ENCODE measurements at regions of chr1 and their contacts with region 1.

Region 1: GRCh38 chr1:11719313-11720032 is 16.5 kb upstream of the AGTRAP start:
- DNase-seq: peak; percentile 47 to 67
- ATAC-seq: peak; percentile 65 to 69
- H3K4me3 ChIP-seq: peak overlapping the region; percentile 29 to 55 (median 50)
- H3K27ac ChIP-seq: no peak overlapping the region
- H3K4me1 ChIP-seq: peaks cover 0 to 8% of the 10 kb centered on the region in 2 donors
- H3K27me3 ChIP-seq: no peaks in the 10 kb centered on the region
- CTCF ChIP-seq: peak; percentile 73 to 96 (median 88)
- POLR2A ChIP-seq: no peak

Region 2: GRCh38 chr1:11661103-11661502 is 58.4 kb before region 1 on chr1:
- in situ Hi-C with region 1: loop called (anchors 5 to 10 kb)
- intact Hi-C with region 1: loop called (anchors 1 kb)
- DNase-seq: no peak
- ATAC-seq: no peak
- H3K4me3 ChIP-seq: no peak overlapping the region
- H3K27ac ChIP-seq: no peak overlapping the region
- H3K4me1 ChIP-seq: no peaks in the 10 kb centered on the region
- H3K27me3 ChIP-seq: no peaks in the 10 kb centered on the region
- CTCF ChIP-seq: no peak
- POLR2A ChIP-seq: no peak

Region 3: DNA sequence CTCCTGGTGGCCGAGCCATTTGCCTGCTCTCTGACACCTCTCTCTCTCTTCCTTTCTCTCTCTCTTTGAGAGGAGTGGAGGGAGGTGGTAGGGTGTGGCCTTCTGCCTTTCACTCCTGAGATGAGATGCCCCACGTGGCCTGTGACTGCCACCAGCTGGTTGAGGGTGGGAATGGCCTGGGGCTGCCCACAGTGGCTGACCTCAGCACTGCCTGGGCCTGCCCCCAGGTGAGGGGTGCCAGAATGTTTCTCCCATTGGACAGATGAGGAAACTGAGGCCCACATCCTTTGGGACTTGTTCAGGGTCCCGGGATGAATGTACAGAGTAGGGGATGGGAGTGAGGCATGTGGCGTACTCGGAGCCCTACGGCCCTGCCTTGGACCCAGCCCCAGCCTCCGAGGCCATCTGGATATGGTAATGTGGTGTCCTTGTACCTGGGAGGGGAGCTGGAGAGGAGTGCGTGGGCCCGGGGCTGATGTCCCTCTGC is 29.8 kb after region 1 on chr1:
- in situ Hi-C with region 1: no loop called
- intact Hi-C with region 1: loop called (anchors 1 kb)
- DNase-seq: no peak
- ATAC-seq: peak in 1 of 2 donors; percentile 59
- H3K4me3 ChIP-seq: no peak overlapping the region
- H3K27ac ChIP-seq: no peak overlapping the region
- H3K4me1 ChIP-seq: no peaks in the 10 kb centered on the region
- H3K27me3 ChIP-seq: no peaks in the 10 kb centered on the region
- CTCF ChIP-seq: peak in 4 of 5 experiments; percentile 32 to 70 (median 50)
- POLR2A ChIP-seq: no peak

Region 4: GRCh38 chr1:12019858-12020509 is 300.5 kb after region 1 on chr1:
- in situ Hi-C with region 1: no loop called
- intact Hi-C with region 1: no loop called
- DNase-seq: no peak
- ATAC-seq: peak in 1 of 2 donors; percentile 3
- H3K4me3 ChIP-seq: peak overlapping the region; percentile 67 to 93 (median 84)
- H3K27ac ChIP-seq: peak overlapping the region; percentile 83 to 90 (median 84)
- H3K4me1 ChIP-seq: peaks cover 6 to 8% of the 10 kb centered on the region in 2 donors
- H3K27me3 ChIP-seq: no peaks in the 10 kb centered on the region
- CTCF ChIP-seq: no peak
- POLR2A ChIP-seq: no peak